Heart left ventricle (tissue), 16 donors: ENCODE measurements at regions of chr10 and their contacts with region 1.

Region 1: GRCh38 chr10:84205049-84205852 is 10.9 kb downstream of the CDHR1 start:
- DNase-seq: peak in 4 of 5 donors; percentile 38 to 75 (median 50)
- ATAC-seq: peak; percentile 68 to 78 (median 76)
- H3K4me3 ChIP-seq: no peak overlapping the region
- H3K27ac ChIP-seq: no peak overlapping the region
- H3K4me1 ChIP-seq: no peaks in the 10 kb centered on the region
- H3K27me3 ChIP-seq: peaks cover 0 to 15% (median 0%) of the 10 kb centered on the region in 9 donors
- CTCF ChIP-seq: peak; percentile 50 to 70 (median 61)
- POLR2A ChIP-seq: no peak

Region 2: GRCh38 chr10:84147347-84147746 is 57.9 kb before region 1 on chr10:
- intact Hi-C with region 1: loop called in 5 of 10 experiments (anchors 2 to 5 kb)
- DNase-seq: no peak
- ATAC-seq: no peak
- H3K4me3 ChIP-seq: no peak overlapping the region
- H3K27ac ChIP-seq: no peak overlapping the region
- H3K4me1 ChIP-seq: peaks cover 0 to 4% (median 0%) of the 10 kb centered on the region in 12 donors
- H3K27me3 ChIP-seq: no peaks in the 10 kb centered on the region
- CTCF ChIP-seq: no peak
- POLR2A ChIP-seq: no peak

Region 3: DNA sequence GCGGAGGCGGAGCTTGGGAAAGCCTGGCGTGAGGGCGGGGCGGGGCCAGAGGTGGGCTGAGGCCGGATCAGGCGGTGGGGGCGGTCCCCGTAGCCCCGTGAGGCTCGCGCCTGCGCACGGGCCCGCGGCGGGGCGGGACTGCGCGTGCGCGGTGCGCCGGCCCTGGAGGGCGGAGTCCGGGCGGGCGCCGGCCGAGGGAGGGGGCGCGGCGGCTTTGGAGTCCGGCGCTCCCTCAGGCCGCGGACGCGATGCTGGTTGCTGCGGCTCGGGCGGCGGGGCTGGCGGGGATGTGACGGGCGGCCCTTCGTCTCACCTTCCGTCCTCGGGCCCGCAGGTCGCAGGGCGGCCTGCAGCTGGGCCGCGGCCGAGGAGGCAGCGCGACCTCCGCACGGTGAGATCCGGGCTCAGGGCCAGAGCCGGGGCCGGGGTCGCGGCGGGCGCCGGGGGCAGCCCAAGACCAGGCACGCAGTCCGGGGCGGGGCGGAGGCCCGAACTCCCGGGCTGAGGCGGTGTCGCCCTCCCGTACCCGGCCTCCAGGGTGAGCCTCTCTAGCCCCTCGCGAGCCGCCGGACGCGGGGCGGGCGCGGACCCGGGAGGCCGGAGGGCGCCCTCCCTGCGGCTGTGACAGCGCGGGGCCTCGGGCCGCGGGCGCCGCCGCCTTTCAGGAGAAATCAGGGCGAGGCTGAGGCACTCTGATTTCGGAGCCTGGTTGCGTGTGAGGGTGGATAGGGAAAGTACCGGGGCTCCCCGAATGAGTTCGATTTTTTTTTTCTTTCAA is 123.4 kb after region 1 on chr10 and contains the start of gene CCSER2:
- intact Hi-C with region 1: no loop called
- DNase-seq: peak; percentile 98 to 99 (median 99)
- ATAC-seq: peak; percentile 97 to 99 (median 98)
- H3K4me3 ChIP-seq: peak within 1 kb of the TSS; percentile 66 to 100 (median 90)
- H3K27ac ChIP-seq: peak within 1 kb of the TSS; percentile 88 to 99 (median 97)
- H3K4me1 ChIP-seq: peaks cover 0 to 48% (median 21%) of the 10 kb centered on the region in 12 donors
- H3K27me3 ChIP-seq: no peaks in the 10 kb centered on the region
- CTCF ChIP-seq: peak in 2 of 12 donors; percentile 11 to 25
- POLR2A ChIP-seq: peak; percentile 56 to 85
- total RNA-seq, gene CCSER2: 101 to 244 (median 161) TPM

Region 4: DNA sequence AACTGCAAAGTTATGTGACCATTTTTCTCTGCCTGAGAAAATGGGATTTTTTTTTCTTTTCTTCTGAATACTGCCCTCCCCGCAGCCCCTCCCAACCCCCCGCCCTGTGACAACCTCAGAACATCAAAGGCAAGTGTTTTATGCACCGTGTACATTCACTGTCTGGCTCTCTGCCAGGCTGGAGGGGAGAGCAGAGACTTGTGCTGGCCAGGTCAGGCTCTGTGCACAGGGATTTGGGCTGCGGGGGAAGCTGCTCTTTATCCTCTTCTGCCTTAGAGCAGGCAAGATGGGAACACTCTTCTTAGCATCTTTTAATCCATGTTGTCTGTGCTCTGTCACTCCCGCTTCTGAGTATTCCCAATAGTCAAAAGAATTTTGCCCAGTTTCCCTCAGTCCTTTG is 318.3 kb after region 1 on chr10:
- intact Hi-C with region 1: no loop called
- DNase-seq: no peak
- ATAC-seq: no peak
- H3K4me3 ChIP-seq: no peak overlapping the region
- H3K27ac ChIP-seq: no peak overlapping the region
- H3K4me1 ChIP-seq: no peaks in the 10 kb centered on the region
- H3K27me3 ChIP-seq: no peaks in the 10 kb centered on the region
- CTCF ChIP-seq: no peak
- POLR2A ChIP-seq: no peak

Region 5: DNA sequence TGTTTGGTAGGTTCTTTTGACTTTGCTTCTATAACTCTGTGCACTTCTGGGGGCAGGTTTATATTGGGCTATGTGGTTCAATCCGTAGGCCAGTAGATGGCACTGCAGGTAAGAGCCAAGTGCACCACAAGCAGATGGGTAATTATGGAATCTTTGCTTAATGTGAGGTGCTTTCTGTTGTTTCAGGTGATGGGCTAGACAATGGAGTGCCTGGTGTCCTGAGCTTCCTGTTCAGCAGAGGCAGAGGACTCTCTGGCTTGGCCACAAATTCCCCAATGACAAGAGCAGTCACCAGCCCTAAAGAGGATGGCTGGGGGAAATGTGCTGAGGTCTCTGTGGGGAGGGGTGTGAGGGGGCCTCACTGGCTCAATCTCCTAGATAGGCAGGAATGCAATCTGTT is 578.1 kb after region 1 on chr10:
- intact Hi-C with region 1: no loop called
- DNase-seq: no peak
- ATAC-seq: peak in 3 of 4 donors; percentile 72 to 77 (median 74)
- H3K4me3 ChIP-seq: no peak overlapping the region
- H3K27ac ChIP-seq: no peak overlapping the region
- H3K4me1 ChIP-seq: peaks cover 0 to 3% (median 0%) of the 10 kb centered on the region in 12 donors
- H3K27me3 ChIP-seq: no peaks in the 10 kb centered on the region
- CTCF ChIP-seq: peak; percentile 34 to 66 (median 52)
- POLR2A ChIP-seq: no peak